AG04449 (cell line): ENCODE measurements at regions of chr15 and their contacts with region 1.

Region 1: GRCh38 chr15:62896978-62897647 is 145.4 kb upstream of the TPM1 start:
- DNase-seq: peak; percentile 97
- H3K4me3 ChIP-seq: no peak overlapping the region
- CTCF ChIP-seq: no peak

Region 2: GRCh38 chr15:62782039-62782791 is 114.9 kb before region 1 on chr15:
- CTCF ChIA-PET with region 1: interaction called, 10 read pairs
- POLR2A ChIA-PET with region 1: interaction called, 3 read pairs
- DNase-seq: peak; percentile 70
- H3K4me3 ChIP-seq: no peak overlapping the region
- CTCF ChIP-seq: peak; percentile 76

Region 3: DNA sequence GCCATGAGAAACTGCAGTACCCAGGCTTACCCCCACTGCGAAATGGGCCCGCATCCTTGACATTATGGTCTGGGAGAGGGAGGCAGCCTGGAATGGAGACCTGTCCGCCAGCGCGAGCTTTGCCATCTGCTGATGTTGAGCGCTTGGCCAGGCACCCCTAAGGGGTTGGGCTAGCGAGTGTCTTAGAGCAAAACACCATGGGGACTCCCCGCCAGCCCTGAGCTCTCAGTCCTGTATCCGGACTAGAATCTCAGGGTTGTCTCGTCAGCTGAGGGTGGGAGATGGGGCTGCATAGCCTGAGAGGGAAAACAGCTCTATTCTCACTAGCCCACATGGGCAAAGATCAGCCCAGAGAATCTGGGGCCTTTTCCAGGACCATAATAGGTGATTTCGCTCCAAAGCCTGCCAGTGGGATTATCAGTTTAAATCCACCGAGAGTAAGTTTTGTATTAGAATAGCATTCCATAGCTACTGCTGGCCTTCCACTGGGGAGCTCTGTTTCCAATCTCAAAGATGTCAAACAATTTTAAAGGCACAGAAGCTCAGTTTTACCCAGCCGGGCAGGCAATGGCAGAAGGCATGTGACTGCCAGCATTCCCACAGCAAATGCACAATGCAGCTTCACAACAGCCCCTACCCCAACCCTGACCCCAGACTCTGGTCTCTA is 22.0 kb before region 1 on chr15:
- CTCF ChIA-PET with region 1: no interaction called
- POLR2A ChIA-PET with region 1: no interaction called
- DNase-seq: no peak
- H3K4me3 ChIP-seq: no peak overlapping the region
- CTCF ChIP-seq: no peak

Region 4: GRCh38 chr15:62940755-62941361 is 43.7 kb after region 1 on chr15:
- CTCF ChIA-PET with region 1: no interaction called
- POLR2A ChIA-PET with region 1: interaction called, 10 read pairs
- DNase-seq: peak; percentile 89
- H3K4me3 ChIP-seq: peak overlapping the region; percentile 24
- CTCF ChIP-seq: no peak